Mucosa of descending colon (tissue), 3 donors: ENCODE measurements at regions of chr4 and their contacts with region 1.

Region 1: DNA sequence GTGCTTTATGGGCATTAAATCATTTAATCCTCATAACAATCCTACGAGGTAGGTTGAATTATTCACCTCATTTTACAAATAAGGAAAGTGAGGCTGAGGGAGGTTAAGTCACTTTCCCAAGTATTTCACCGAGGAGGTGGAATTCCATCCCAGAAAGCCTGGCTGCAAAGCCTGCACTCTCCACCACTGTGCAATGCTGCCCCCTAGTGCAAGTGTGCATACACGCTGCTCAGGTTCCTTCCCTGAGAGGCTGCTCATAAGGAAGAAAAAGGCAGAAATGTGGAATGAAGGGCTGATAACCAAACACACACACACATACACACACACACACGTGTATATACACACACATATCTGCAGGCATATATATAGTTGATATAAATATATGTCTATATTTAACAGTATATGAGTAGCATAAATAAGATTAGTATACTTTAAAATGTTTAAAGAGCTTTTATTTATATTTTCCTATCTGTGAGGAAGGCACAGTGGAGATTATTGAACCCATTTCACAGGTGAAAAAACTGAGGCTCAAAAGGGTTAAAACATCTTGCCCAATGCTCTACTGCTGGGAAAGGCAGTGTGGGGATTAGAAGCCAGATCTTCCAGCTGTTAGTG is 714.5 kb upstream of the TENM3 start:
- DNase-seq: peak; percentile 61 to 84 (median 82)
- ATAC-seq: peak; percentile 98
- H3K4me3 ChIP-seq: no peak overlapping the region
- H3K4me1 ChIP-seq: no peaks in the 10 kb centered on the region
- CTCF ChIP-seq: peak; percentile 69

Region 2: DNA sequence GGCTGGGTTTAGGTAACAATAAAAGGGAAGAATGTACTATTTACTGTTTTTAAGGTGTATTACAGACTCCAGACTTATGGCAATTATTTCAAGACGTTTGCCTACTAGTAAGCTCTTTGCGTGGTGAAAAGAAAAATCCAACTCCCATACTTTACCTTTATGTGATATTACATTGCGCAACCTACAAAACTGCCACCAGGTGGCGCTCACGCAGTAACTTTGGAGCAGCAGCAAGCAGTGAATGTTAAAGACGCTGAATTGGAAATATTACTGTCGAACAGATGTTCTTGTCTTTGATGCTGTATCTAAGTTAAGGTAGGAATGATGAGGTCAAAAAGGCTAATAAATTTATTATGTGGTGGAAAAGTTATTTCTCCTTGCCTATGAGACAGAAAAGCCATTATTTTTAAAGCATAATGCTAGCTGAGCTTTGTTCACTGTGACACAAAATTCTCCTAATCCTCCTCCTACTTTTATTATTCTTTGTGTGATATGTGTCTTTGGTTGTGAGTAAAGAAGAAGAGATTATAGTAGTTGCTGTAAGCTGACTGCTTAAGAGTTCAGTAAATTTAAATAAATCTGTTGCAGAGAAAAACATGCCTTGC is 385.3 kb before region 1 on chr4:
- intact Hi-C with region 1: loop called in 1 of 2 experiments (anchors 2 kb)
- DNase-seq: peak; percentile 60 to 86 (median 71)
- ATAC-seq: peak; percentile 68
- H3K4me3 ChIP-seq: no peak overlapping the region
- H3K4me1 ChIP-seq: peaks cover 6% of the 10 kb centered on the region
- CTCF ChIP-seq: peak; percentile 88

Region 3: DNA sequence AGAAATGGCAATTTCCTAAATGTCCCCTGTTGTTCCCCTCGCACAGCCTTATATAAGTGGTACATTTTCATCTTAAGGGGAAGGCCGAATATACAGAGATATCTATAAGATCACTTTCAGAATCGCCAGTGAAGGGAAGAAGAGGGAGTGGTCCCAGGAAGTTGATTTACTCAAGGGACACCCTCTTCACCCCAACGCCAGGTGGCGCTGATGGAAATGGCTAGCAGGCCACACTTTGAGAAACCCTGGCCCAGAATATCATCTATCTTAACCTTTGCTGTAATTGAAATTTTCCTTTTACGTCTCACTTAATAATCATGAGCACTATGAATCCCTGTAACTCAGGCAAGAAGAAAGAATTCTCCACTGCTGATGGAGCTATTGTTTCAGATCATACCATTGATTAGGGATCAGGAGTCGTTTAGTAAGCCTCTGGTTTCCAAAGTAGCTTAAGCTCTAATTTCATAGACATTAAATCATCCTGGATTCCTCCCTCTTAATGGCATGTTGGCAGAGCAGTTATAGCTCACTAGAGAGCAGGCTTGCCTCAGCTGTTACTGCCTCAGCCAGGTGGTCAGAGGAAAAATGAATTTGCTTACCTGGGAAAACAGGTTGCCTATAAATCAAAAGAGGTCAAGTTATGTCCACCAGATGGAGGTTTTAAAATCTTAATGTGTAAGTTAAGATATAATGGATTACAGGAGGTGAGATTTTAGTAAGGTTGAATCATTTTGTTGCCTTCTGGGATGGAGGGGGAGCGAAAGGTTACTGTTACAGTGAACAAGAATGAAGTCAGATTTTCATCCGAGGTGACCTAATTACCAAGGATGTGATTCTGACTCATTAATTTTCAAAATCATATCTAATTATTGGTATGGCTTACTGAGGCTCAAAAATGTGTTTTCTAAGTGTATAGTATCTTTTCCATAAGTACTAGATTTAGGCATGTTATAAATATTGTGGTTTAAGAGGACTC is 226.7 kb before region 1 on chr4:
- intact Hi-C with region 1: loop called in 1 of 2 experiments (anchors 10 kb)
- DNase-seq: peak in 2 of 3 donors; percentile 72 to 79
- ATAC-seq: peak; percentile 71
- H3K4me3 ChIP-seq: no peak overlapping the region
- H3K4me1 ChIP-seq: no peaks in the 10 kb centered on the region
- CTCF ChIP-seq: peak; percentile 33